Right ventricle myocardium superior (tissue), 1 donor: ENCODE measurements at regions of chr2 and their contacts with region 1.

Region 1: DNA sequence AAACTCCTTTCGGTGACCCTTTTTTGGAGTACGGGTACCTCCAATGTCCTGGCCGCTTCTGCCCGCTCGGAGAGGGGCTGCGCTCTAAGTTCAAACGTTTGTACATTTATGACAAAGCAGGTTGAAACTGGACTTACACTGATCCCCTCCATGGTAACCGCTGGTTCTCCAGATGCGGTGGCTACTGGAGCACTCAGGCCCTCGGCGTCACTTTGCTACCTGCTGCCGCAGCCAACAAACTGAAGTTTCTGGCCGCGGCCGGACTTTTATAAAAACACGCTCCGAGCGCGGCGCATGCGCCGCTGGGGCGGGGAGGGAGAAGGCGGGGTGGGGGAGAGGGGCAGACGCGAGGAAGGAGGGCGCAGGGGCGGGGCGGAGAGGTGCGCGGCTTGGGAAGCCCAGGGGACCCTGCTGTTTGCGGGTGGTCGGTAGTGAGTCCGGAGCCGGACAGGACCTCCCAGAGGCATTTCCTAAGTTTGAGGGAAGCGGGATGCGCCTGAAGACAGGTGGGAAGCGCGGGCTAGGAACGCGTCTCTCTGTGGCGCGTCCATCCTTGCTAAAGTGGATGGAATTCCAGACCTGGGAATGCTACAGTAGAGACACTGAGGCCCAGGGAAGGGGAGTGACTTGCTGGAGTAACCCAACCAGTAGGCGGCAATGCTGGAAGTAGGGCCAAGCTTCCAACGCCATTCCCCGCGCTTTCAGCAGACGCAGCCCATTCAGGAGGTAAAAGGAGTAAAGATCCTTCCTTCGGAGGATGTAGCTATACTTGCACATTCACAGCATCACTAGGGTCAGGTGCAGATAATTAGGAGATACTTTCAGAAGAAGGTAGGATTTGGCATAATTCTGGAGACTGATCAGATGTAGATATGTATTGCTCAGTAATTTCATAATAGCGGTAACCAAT is at the start of gene CXCR4:
- DNase-seq: peak; percentile 85
- ATAC-seq: peak; percentile 67
- total RNA-seq, gene CXCR4: 2.0 TPM

Region 2: DNA sequence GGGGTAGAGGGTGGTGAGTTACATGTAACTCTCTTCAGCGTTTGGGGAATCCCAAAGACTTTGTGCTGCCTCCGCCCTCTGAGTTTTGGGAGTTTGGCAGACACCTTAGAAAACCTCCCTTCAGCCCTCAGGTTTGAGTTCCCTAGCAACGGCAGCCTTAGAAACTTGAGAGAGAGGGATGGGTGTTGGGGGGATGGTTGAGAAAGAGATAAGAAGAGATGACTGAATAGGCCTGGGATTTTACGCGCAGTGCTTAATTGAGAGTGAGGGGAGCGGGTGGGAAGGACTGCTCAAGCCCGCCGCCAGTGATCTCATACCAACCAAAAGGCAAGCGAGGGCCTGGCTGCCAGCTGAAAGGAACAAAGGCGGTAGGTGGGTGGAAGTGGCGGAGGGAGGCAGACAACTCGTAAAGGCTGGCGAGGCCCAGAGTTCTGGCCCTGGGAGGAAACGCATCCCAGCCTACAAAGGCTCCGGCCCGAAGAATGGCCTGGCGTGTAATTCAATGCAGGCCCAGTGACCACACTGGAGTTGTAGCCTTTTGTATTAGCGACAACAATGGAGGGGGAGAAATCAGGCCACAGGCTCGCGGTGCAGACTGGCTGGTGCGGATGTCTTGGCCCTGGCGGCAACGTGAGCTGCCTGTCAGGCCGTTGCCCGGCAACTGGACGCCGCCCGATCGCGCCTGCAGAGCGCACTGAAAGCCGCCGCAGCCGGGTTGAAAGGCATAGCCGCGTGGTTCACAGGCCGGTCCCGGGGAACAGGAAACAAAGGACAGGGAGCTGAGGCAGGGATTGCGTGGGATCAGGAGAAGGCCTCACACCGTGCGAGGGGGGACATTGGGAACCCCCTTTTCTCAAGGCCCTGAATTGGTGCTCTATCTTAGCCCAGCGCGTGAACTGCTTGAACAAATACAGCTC is 92.8 kb before region 1 on chr2:
- intact Hi-C with region 1: loop called (anchors 10 kb)
- DNase-seq: peak; percentile 85
- ATAC-seq: peak; percentile 98